ENCODE measurements at regions of chr9 and their contacts with region 1.

Region 1: GRCh38 chr9:94799578-94800264 is 73.2 kb downstream of the AOPEP start:
- DNase-seq: peak; percentile 91
- H3K4me3 ChIP-seq: no peak overlapping the region
- H3K27ac ChIP-seq: peak overlapping the region; percentile 39
- H3K4me1 ChIP-seq: peaks cover 17% of the 10 kb centered on the region
- H3K27me3 ChIP-seq: no peaks in the 10 kb centered on the region
- CTCF ChIP-seq: no peak
- POLR2A ChIP-seq: no peak

Region 2: DNA sequence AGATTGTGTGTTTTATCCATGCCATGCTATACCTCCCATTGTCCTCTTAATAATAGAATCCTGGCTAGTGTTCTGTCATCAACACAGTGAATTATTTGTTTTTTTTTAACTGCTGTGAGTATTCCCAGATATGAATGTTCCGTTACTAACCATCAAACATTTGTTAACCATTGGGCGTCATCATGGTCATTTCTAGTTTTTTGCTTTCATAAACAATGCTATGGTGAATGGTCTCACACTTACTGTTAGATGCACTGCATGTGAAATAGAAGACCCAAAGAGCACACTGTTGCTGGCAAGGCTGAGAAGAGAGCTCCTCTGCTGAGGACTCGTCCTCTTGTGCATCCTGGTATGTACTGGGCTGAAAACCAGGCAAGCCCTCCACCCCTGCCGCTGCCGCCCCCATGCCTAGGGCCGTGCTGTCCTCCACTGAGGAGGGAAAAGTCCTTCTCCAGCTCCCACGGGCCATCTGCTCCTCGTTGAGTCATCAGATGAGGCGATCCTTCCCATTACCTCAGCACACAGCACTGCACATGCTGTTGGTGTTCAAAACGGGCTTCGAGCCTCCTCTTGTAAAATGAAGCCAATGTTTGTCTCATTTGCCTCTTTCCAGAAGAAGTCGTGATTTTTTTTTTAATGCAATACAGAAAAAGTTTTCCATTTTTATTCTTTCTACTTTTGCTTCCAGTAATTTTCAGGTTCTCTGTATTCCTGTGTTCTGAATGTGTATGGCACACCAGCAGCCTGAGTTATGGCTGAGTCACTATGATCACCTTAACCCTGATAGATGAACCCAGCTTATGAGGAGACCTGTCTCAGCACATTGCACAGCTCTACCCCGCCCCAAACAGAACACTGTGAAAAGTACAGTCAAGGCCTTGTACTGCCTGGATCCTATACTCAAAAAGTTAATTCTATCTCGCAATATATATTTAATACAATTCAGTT is 145.8 kb after region 1 on chr9:
- CTCF ChIA-PET with region 1: interaction called, 3 read pairs
- POLR2A ChIA-PET with region 1: interaction called, 10 read pairs
- dilution Hi-C with region 1: no loop called
- intact Hi-C with region 1: no loop called
- DNase-seq: peak; percentile 55
- H3K4me3 ChIP-seq: no peak overlapping the region
- H3K27ac ChIP-seq: no peak overlapping the region
- H3K4me1 ChIP-seq: peaks cover 19% of the 10 kb centered on the region
- H3K27me3 ChIP-seq: no peaks in the 10 kb centered on the region
- CTCF ChIP-seq: no peak
- POLR2A ChIP-seq: no peak

Region 3: GRCh38 chr9:95018099-95018936 is 218.6 kb after region 1 on chr9:
- CTCF ChIA-PET with region 1: no interaction called
- POLR2A ChIA-PET with region 1: no interaction called
- dilution Hi-C with region 1: no loop called
- intact Hi-C with region 1: no loop called
- DNase-seq: peak; percentile 81
- H3K4me3 ChIP-seq: no peak overlapping the region
- H3K27ac ChIP-seq: peak overlapping the region; percentile 62
- H3K4me1 ChIP-seq: peaks cover 15% of the 10 kb centered on the region
- H3K27me3 ChIP-seq: no peaks in the 10 kb centered on the region
- CTCF ChIP-seq: no peak
- POLR2A ChIP-seq: no peak